HepG2 (cell line): ENCODE measurements at regions of chr9 and their contacts with region 1.

Region 1: DNA sequence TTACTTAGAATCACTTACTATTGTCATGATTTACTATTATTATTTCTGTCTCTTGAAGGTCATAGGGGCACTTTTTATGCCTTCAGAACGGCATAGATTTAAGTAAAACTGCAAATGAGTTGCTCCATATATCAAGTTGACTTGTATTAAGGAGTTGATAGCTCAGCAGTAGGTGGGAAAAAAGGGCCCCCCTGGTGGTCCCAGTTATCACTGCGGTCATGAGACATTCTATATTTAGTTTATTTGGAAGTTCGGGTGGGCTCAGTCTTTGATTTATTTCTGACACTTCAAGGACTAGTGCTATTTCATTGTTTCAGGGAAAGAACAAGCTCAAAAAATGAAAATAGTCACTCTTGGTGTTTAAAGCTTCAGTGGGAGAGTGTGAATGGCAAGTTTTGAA is 159.3 kb downstream of the SLC24A2 start:
- DNase-seq: no peak
- ATAC-seq: no peak
- H3K4me3 ChIP-seq: no peak overlapping the region
- H3K27ac ChIP-seq: no peak overlapping the region
- H3K4me1 ChIP-seq: no peaks in the 10 kb centered on the region
- H3K27me3 ChIP-seq: no peaks in the 10 kb centered on the region
- CTCF ChIP-seq: no peak
- EP300 ChIP-seq: no peak
- POLR2A ChIP-seq: no peak
- RAD21 ChIP-seq: no peak

Region 2: GRCh38 chr9:19568946-19569345 is 60.5 kb before region 1 on chr9:
- CTCF ChIA-PET with region 1: no interaction called
- POLR2A ChIA-PET with region 1: no interaction called
- in situ Hi-C with region 1: no loop called
- intact Hi-C with region 1: no loop called
- DNase-seq: no peak
- ATAC-seq: no peak
- H3K4me3 ChIP-seq: no peak overlapping the region
- H3K27ac ChIP-seq: no peak overlapping the region
- H3K4me1 ChIP-seq: no peaks in the 10 kb centered on the region
- H3K27me3 ChIP-seq: no peaks in the 10 kb centered on the region; a peak in 1 of 5 replicates
- CTCF ChIP-seq: no peak
- EP300 ChIP-seq: no peak
- POLR2A ChIP-seq: no peak
- RAD21 ChIP-seq: no peak

Region 3: DNA sequence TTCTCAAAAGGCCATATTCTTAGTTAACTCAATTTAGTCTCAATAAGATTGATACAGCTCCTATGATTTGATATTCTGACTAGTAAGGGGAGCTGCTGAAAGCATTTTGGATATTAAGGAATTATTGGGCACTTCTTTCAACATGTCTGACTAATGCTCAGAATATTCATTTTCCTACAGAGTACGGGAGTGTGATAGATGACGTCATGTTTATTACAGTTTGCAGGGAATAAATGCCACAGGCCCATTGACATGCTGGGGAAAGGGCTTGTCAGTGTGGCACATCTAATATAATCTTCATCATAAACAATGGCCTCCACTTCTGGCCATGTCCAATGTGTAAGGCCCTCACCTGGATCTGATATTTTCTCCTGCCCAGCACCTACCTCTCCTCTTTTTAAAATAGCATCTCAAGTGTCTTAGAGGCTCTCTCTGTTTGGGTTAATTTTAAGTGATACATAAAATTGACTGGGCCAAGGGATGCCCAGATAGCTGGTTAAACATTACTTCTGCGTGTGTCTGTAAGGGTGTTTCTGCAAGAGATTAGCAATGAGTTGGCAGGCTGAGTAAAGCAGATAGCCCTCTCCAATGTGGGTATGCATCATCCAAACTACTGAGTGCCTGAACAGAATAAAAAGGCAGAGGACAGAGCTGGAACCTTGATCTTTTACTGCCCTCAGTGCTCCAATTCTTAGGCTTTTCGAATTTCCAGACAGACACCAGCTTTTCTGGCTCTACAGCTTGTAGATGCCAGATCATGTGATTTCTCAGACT is 60.0 kb after region 1 on chr9:
- CTCF ChIA-PET with region 1: no interaction called
- POLR2A ChIA-PET with region 1: no interaction called
- in situ Hi-C with region 1: loop called (anchors 10 kb)
- intact Hi-C with region 1: no loop called
- DNase-seq: no peak
- ATAC-seq: no peak
- H3K4me3 ChIP-seq: no peak overlapping the region
- H3K27ac ChIP-seq: no peak overlapping the region
- H3K4me1 ChIP-seq: no peaks in the 10 kb centered on the region
- H3K27me3 ChIP-seq: no peaks in the 10 kb centered on the region
- CTCF ChIP-seq: no peak
- EP300 ChIP-seq: no peak
- POLR2A ChIP-seq: no peak
- RAD21 ChIP-seq: no peak